ENCODE measurements at regions of chr1 and their contacts with region 1.

Region 1: DNA sequence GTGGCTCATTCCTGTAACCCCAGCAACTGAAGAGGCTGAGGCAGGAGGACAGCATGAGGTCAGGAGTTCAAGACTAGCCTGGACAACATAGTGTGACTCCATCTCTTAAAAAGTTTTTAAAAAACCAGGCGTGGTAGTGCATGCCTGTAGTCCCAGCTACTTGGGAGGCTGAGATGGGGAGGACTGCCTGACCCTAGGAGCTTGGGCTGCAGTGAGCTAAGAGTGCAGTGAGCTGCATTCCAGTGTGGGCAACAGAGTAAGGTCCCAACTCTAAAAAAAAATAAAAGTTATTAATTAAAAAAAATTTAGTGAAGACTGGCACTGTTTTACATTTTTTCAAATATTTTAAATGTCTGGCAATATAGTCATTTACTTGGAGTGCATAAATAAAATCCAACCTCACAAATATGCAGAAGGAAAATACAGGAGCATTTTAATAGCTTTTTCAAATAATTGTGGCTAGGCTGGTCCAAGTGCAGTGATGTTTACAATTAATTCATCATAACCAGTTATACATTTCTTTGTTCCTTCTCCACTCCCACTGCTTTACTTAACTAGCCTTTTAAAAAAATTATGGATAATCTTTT is 10.8 kb downstream of the ZBTB8OS start:
- DNase-seq: no peak
- ATAC-seq: no peak
- H3K4me3 ChIP-seq: no peak overlapping the region
- H3K4me3 Mint-ChIP-seq: no peak overlapping the region
- H3K27ac ChIP-seq: no peak overlapping the region
- H3K27ac Mint-ChIP-seq: no peak overlapping the region
- H3K4me1 ChIP-seq: no peaks in the 10 kb centered on the region
- H3K4me1 Mint-ChIP-seq: peaks cover 11 to 23% (median 14%) of the 10 kb centered on the region in 3 donors
- H3K27me3 ChIP-seq: no peaks in the 10 kb centered on the region
- H3K27me3 Mint-ChIP-seq: no peaks in the 10 kb centered on the region

Region 2: DNA sequence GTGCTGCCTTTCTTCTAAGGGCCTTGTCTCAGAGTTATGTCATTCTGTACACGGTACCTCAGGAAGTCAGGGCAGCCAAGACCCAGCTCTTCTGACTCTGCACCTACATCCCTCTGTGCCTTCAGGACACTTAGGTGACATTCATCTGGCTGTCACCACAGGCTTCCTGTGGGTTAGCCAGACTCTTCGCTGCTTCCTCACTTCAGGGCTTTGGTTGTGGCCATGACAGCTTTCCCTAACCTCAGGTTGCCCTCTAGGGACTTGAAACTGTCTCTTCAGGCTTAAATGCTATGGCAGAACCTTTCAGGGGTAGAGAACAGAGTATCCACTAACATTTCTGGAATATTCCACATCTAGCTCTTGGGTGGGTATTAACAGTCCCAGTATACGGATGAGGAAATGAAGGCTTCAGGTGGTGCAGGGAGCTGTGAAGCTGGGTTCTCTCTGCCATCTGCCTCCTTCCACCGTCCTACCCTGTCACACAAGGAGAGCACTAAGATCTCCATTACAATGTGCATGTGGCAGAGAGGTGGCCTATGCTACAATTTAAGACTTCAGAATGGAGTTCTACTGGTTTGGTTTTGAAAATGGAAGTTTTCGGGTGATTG is 267.3 kb before region 1 on chr1:
- CTCF ChIA-PET with region 1: no interaction called
- POLR2A ChIA-PET with region 1: no interaction called
- DNase-seq: peak; percentile 26 to 82 (median 50)
- ATAC-seq: peak; percentile 85 to 95 (median 92)
- H3K4me3 ChIP-seq: no peak overlapping the region
- H3K4me3 Mint-ChIP-seq: peak overlapping the region in 1 of 3 donors; percentile 2
- H3K27ac ChIP-seq: no peak overlapping the region
- H3K27ac Mint-ChIP-seq: peak overlapping the region; percentile 60 to 68
- H3K4me1 ChIP-seq: peaks cover 10 to 16% of the 10 kb centered on the region in 2 experiments
- H3K4me1 Mint-ChIP-seq: peaks cover 19 to 27% (median 21%) of the 10 kb centered on the region in 3 donors
- H3K27me3 ChIP-seq: no peaks in the 10 kb centered on the region
- H3K27me3 Mint-ChIP-seq: no peaks in the 10 kb centered on the region

Region 3: DNA sequence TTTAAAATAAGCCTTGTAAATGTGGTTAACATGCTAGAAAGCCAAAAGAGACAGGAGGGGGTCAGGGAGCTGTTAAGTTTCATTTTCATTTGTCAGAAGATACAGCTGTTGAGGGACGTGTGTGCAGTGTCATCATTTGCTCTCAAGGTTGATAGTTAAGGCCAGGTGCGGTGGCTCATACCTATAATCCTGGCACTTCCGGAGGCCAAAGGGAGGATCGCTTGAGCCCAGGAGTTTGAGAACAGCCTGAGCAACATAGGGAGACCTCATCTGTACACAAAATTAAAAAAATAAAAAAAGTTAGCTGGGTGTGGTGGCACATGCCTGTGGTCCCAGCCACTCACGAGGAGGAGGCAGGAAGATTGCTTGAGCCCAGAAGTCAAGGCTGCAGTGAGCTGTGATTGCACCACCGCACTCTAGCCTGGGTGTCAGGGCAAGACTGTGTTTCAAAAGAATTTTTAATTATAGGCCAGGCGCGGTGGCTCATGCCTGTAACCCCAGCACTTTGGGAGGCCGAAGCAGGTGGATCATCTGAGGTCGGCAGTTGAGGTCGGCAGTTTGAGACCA is 11.9 kb before region 1 on chr1:
- CTCF ChIA-PET with region 1: no interaction called
- POLR2A ChIA-PET with region 1: interaction called in 1 of 2 experiments, 11 read pairs
- DNase-seq: peak in 22 of 35 experiments; percentile 5 to 57 (median 19)
- ATAC-seq: peak; percentile 30 to 74 (median 48)
- H3K4me3 ChIP-seq: no peak overlapping the region
- H3K4me3 Mint-ChIP-seq: peak overlapping the region; percentile 21 to 34 (median 25)
- H3K27ac ChIP-seq: peak overlapping the region; percentile 56
- H3K27ac Mint-ChIP-seq: peak overlapping the region; percentile 61 to 80
- H3K4me1 ChIP-seq: peaks cover 0 to 19% of the 10 kb centered on the region in 2 experiments
- H3K4me1 Mint-ChIP-seq: peaks cover 26 to 28% (median 26%) of the 10 kb centered on the region in 3 donors
- H3K27me3 ChIP-seq: no peaks in the 10 kb centered on the region
- H3K27me3 Mint-ChIP-seq: no peaks in the 10 kb centered on the region

Region 4: GRCh38 chr1:32652244-32652962 is 12.8 kb after region 1 on chr1:
- CTCF ChIA-PET with region 1: no interaction called
- POLR2A ChIA-PET with region 1: no interaction called
- DNase-seq: no peak
- ATAC-seq: no peak
- H3K4me3 ChIP-seq: no peak overlapping the region
- H3K4me3 Mint-ChIP-seq: peak overlapping the region; percentile 90 to 92 (median 91)
- H3K27ac ChIP-seq: peak overlapping the region; percentile 93
- H3K27ac Mint-ChIP-seq: peak overlapping the region; percentile 92 to 99
- H3K4me1 ChIP-seq: peaks cover 29 to 56% of the 10 kb centered on the region in 2 experiments
- H3K4me1 Mint-ChIP-seq: peaks cover 66 to 75% (median 67%) of the 10 kb centered on the region in 3 donors
- H3K27me3 ChIP-seq: no peaks in the 10 kb centered on the region
- H3K27me3 Mint-ChIP-seq: no peaks in the 10 kb centered on the region